Ovary (tissue), 10 donors: ENCODE measurements at regions of chr5 and their contacts with region 1.

Region 1: GRCh38 chr5:64971513-64971912 is 202.8 kb downstream of the CWC27 start:
- DNase-seq: no peak
- H3K4me3 ChIP-seq: no peak overlapping the region
- H3K27ac ChIP-seq: no peak overlapping the region
- H3K4me1 ChIP-seq: no peaks in the 10 kb centered on the region
- H3K27me3 ChIP-seq: no peaks in the 10 kb centered on the region
- CTCF ChIP-seq: no peak
- EP300 ChIP-seq: no peak
- POLR2A ChIP-seq: no peak

Region 2: GRCh38 chr5:64952951-64953673 is 18.4 kb before region 1 on chr5:
- intact Hi-C with region 1: loop called in 1 of 4 experiments (anchors 1 kb)
- DNase-seq: no peak
- H3K4me3 ChIP-seq: no peak overlapping the region
- H3K27ac ChIP-seq: no peak overlapping the region
- H3K4me1 ChIP-seq: no peaks in the 10 kb centered on the region
- H3K27me3 ChIP-seq: no peaks in the 10 kb centered on the region
- CTCF ChIP-seq: no peak
- EP300 ChIP-seq: no peak
- POLR2A ChIP-seq: no peak

Region 3: DNA sequence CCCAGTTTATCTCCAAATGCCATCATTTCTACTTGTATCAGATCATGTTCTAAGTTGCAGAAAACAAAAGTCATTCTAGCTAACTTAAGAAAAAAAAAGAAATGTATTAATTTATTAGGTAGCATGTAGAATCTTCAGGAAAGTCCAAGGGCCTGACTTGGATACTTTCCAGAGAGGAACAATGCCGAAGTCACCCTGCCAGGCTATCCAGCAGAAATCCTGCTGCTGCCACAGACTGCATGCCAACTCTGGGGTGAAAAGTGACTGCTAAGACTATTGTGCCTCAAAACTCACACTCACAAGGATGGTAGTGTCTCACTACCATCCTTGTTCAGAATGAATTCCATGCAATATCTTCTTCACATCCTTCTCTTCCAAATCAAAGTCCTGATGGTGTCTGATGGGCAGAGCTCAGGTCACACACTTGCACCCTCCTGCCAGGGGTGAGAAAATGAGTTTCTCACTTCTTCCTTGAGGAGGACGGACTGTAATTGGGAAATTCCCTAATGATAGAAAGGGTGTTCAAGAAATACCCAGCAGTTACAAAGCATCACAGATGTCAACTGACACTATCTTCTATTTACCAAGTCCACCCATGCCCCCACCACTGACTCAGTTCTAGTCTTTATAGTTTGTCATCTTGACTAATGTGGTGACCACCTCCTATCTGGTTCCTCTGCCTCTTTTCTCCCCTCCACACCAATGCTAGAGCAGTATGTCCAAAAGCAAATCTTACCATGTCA is 76.6 kb after region 1 on chr5:
- intact Hi-C with region 1: no loop called
- DNase-seq: no peak
- H3K4me3 ChIP-seq: no peak overlapping the region
- H3K27ac ChIP-seq: no peak overlapping the region
- H3K4me1 ChIP-seq: no peaks in the 10 kb centered on the region
- H3K27me3 ChIP-seq: no peaks in the 10 kb centered on the region
- CTCF ChIP-seq: no peak
- EP300 ChIP-seq: no peak
- POLR2A ChIP-seq: no peak

Region 4: GRCh38 chr5:65102828-65103711 is 131.6 kb after region 1 on chr5:
- intact Hi-C with region 1: loop called in 1 of 4 experiments (anchors 10 kb)
- DNase-seq: peak; percentile 58 to 79 (median 66)
- H3K4me3 ChIP-seq: peak overlapping the region; percentile 44
- H3K27ac ChIP-seq: peak overlapping the region; percentile 65 to 80
- H3K4me1 ChIP-seq: peaks cover 6% of the 10 kb centered on the region
- H3K27me3 ChIP-seq: no peaks in the 10 kb centered on the region
- CTCF ChIP-seq: peak; percentile 12 to 34 (median 24)
- EP300 ChIP-seq: no peak
- POLR2A ChIP-seq: no peak